Activated CD8-positive, alpha-beta T cell treated with anti-CD3 and anti-CD28 coated beads for 36 hours (primary cell): ENCODE measurements at regions of chr5 and their contacts with region 1.

Region 1: DNA sequence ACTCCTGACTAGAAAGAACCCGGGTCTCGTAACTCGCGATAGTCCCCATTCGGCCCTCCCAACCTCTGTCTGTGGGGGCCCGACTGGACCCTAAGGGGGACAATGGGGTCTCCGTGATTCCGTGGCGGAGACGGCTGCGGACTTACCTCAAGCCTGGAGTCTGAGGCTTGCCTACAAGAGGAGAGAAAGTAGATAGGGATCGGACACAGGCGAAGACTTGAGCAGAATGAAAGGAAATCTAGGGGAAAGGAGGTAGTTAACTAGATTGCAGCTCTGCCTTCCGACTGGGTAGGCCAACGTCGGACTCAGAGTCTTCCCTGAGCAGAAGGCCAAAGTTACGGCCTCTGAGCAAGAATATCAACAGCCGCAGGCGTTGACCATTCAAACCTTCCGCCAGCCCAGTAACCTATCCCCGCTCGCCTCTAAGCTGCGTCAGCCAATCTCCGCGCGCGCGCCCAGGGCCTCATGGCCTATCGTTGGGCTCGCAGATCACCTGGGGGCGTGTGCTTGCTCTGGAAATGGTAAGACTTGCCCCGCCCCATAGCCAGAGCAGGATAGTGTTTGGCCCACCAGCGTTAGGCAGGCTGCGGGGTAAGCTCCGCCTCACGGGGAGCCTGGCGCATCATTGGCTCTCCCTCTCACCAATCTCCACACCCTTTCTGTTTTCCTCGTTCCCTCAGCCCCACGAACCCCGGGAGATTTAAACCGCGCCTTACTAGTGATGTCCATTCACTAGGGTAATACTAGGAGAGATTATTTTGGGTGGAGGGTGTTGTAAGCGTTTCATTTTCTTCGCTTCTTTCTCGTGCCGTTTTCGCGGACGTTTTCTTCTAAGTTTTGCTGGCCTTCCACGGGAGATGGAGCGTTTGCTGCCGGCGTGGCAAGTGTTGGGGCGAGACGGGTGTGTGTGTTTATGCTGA is at the start of gene CDC25C:
- DNase-seq: peak; percentile 99
- ATAC-seq: peak; percentile 99
- H3K4me3 Mint-ChIP-seq: peak within 1 kb of the TSS; percentile 97
- H3K27ac Mint-ChIP-seq: peak within 1 kb of the TSS; percentile 86
- H3K4me1 Mint-ChIP-seq: peaks cover 13% of the 10 kb centered on the region
- H3K27me3 Mint-ChIP-seq: no peaks in the 10 kb centered on the region
- CTCF ChIP-seq: no peak
- total RNA-seq, gene CDC25C: 12.2 to 14.6 TPM

Region 2: GRCh38 chr5:138178516-138179276 is 153.0 kb before region 1 on chr5 and contains the starts of genes BRD8 and KIF20A:
- CTCF ChIA-PET with region 1: interaction called, 3 read pairs
- POLR2A ChIA-PET with region 1: interaction called, 3 read pairs
- intact Hi-C with region 1: loop called (anchors 2 kb)
- DNase-seq: peak; percentile 98
- ATAC-seq: peak; percentile 91
- H3K4me3 Mint-ChIP-seq: no peak within 1 kb of the TSS
- H3K27ac Mint-ChIP-seq: no peak within 1 kb of the TSS
- H3K4me1 Mint-ChIP-seq: peaks cover 20% of the 10 kb centered on the region
- H3K27me3 Mint-ChIP-seq: no peaks in the 10 kb centered on the region
- CTCF ChIP-seq: no peak
- total RNA-seq, gene BRD8: 42.0 to 46.3 TPM
- total RNA-seq, gene KIF20A: 50.7 to 51.4 TPM

Region 3: GRCh38 chr5:138213161-138214029 is 118.3 kb before region 1 on chr5 and contains the start of gene CDC23:
- CTCF ChIA-PET with region 1: interaction called, 4 read pairs
- POLR2A ChIA-PET with region 1: interaction called, 4 read pairs
- intact Hi-C with region 1: loop called (anchors 10 kb)
- DNase-seq: peak; percentile 95
- ATAC-seq: peak; percentile 97
- H3K4me3 Mint-ChIP-seq: peak within 1 kb of the TSS; percentile 94
- H3K27ac Mint-ChIP-seq: peak within 1 kb of the TSS; percentile 98
- H3K4me1 Mint-ChIP-seq: peaks cover 16% of the 10 kb centered on the region
- H3K27me3 Mint-ChIP-seq: no peaks in the 10 kb centered on the region
- CTCF ChIP-seq: no peak
- total RNA-seq, gene CDC23: 40.4 to 43.8 TPM

Region 4: DNA sequence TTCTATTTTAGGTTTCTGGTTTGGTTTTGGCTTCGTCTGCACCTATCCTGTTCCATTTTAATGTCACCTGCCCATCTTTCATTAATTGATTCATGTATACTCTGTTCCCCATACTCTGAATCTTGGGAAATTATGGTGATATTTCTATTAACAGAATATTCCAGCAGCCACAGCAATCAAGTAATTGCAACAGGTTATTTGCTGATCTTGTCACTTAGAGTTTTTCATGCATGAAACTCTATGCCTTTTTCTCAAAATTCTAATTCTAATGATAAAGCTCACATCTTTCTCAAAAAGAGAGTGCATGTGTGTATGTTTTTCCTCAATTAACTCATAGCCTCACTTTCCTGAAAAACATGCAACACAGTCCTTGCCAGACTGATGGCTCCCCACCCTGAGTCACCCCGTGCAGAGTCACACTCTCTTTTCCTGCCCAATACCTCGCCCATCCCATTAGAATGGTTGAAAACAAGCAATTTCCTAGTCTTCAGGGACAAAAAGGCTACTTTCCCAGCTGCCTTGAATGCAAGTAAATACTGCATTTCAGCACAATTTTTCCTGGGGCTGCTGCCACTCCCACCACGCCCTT is 72.9 kb before region 1 on chr5:
- CTCF ChIA-PET with region 1: no interaction called
- POLR2A ChIA-PET with region 1: no interaction called
- intact Hi-C with region 1: no loop called
- DNase-seq: no peak
- ATAC-seq: no peak
- H3K4me3 Mint-ChIP-seq: no peak overlapping the region
- H3K27ac Mint-ChIP-seq: no peak overlapping the region
- H3K4me1 Mint-ChIP-seq: peaks cover 3% of the 10 kb centered on the region
- H3K27me3 Mint-ChIP-seq: no peaks in the 10 kb centered on the region
- CTCF ChIP-seq: no peak